GM12878 (cell line): ENCODE measurements at regions of chr17 and their contacts with region 1.

Region 1: DNA sequence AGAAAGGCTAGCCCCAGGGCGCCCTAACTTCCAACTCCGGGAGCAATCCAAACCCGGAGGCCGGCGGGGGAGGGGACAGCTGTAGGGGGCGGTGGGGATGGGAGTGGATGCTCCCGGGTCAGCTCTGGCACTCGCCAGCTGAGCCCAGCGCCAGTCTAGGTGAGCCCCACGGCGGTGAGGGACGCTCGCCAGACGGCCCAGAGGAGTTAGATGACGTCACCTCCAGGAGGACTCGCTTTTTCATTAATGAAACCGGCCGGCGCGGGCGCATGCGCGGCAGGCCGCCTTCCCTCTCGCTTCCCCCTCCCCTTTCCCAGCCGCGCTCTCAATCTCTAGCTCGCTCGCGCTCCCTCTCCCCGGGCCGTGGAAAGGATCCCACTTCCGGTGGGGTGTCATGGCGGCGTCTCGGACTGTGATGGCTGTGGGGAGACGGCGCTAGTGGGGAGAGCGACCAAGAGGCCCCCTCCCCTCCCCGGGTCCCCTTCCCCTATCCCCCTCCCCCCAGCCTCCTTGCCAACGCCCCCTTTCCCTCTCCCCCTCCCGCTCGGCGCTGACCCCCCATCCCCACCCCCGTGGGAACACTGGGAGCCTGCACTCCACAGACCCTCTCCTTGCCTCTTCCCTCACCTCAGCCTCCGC is at the start of gene NF1:
- DNase-seq: peak; percentile 63
- ATAC-seq: peak; percentile 88
- H3K4me3 ChIP-seq: peak within 1 kb of the TSS; percentile 100
- H3K27ac ChIP-seq: peak within 1 kb of the TSS; percentile 76
- H3K4me1 ChIP-seq: no peaks in the 10 kb centered on the region
- H3K27me3 ChIP-seq: no peaks in the 10 kb centered on the region
- CTCF ChIP-seq: no peak
- EP300 ChIP-seq: no peak
- POLR2A ChIP-seq: peak; percentile 81
- RAD21 ChIP-seq: no peak
- polyA plus RNA-seq, gene NF1: 2.5 to 5.6 TPM

Region 2: GRCh38 chr17:31112001-31112661 is 17.4 kb after region 1 on chr17:
- CTCF ChIA-PET with region 1: interaction called, 11 read pairs
- POLR2A ChIA-PET with region 1: interaction called, 3 read pairs
- RAD21 ChIA-PET with region 1: no interaction called
- SMC1A ChIA-PET with region 1: interaction called, 11 read pairs
- in situ Hi-C with region 1: no loop called
- intact Hi-C with region 1: no loop called
- DNase-seq: no peak
- ATAC-seq: peak; percentile 57
- H3K4me3 ChIP-seq: no peak overlapping the region
- H3K27ac ChIP-seq: no peak overlapping the region
- H3K4me1 ChIP-seq: peaks cover 5% of the 10 kb centered on the region; the same call in 1 of the 2 replicates
- H3K27me3 ChIP-seq: no peaks in the 10 kb centered on the region
- CTCF ChIP-seq: no peak
- EP300 ChIP-seq: no peak
- POLR2A ChIP-seq: no peak
- RAD21 ChIP-seq: no peak